GM12878 (cell line): ENCODE measurements at regions of chr3 and their contacts with region 1.

Region 1: GRCh38 chr3:27415202-27415601 is 46.0 kb upstream of the NEK10 start:
- DNase-seq: no peak
- ATAC-seq: no peak
- H3K4me3 ChIP-seq: no peak overlapping the region
- H3K27ac ChIP-seq: no peak overlapping the region
- H3K4me1 ChIP-seq: no peaks in the 10 kb centered on the region
- H3K27me3 ChIP-seq: no peaks in the 10 kb centered on the region
- CTCF ChIP-seq: no peak
- EP300 ChIP-seq: no peak
- POLR2A ChIP-seq: no peak
- RAD21 ChIP-seq: no peak

Region 2: DNA sequence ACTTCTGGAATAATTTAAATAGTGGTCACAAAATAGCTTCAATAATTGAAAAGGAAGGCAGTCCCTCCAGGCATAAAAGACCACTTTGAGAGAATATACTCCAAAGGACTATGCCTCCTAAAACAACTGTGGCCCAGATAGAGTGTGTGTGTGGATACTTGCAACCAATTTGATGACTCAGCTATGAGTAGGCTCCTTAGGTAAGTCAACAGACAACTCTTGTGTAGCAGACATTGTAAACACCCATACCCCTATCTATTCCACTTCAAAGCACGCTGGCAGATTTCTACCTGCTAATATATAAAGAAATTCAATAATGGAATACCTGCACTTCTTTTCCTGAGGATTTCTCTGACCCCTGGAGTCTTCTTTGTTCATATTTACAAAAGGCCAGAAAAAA is 300.5 kb before region 1 on chr3:
- CTCF ChIA-PET with region 1: no interaction called
- POLR2A ChIA-PET with region 1: no interaction called
- RAD21 ChIA-PET with region 1: no interaction called
- SMC1A ChIA-PET with region 1: no interaction called
- in situ Hi-C with region 1: no loop called
- intact Hi-C with region 1: no loop called
- DNase-seq: no peak
- ATAC-seq: no peak
- H3K4me3 ChIP-seq: no peak overlapping the region
- H3K27ac ChIP-seq: no peak overlapping the region
- H3K4me1 ChIP-seq: no peaks in the 10 kb centered on the region
- H3K27me3 ChIP-seq: no peaks in the 10 kb centered on the region
- CTCF ChIP-seq: no peak
- EP300 ChIP-seq: no peak
- POLR2A ChIP-seq: no peak
- RAD21 ChIP-seq: no peak

Region 3: DNA sequence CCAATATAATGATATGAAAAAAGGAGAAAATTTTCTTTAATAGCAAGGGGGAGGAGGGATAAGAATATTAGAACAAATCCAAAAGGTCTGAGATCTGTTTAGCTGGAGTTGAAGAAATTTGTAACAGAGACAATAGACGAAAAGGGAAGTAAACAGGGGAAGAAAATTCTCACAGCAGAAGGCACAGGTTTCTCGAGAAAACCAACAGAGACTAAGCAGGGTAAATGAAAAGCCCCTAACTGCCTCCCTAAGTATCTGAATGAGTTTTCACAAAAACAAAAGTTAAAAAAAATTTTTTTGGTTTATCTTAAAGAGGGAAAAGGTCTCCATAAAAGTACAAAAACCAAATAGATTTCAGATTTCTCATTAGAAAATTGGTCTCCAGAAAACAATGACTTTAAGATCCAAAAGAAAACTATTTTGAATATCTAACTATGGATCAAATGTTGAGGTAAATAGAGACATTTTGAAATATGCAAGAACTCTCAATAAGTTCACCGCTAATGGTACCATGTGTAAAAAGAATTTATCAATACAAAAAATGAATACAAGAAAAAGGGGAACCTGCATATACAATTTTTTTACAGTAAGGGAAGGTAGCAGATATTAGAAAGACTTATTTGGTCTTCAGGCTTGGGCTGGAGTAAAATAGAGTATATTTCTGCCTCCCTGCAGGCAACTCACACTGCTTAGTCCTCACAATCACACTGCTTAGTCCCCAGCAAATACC is 22.1 kb before region 1 on chr3:
- CTCF ChIA-PET with region 1: interaction called, 3 read pairs
- POLR2A ChIA-PET with region 1: no interaction called
- RAD21 ChIA-PET with region 1: interaction called, 3 read pairs
- SMC1A ChIA-PET with region 1: interaction called, 10 read pairs
- in situ Hi-C with region 1: no loop called
- intact Hi-C with region 1: no loop called
- DNase-seq: peak; percentile 15
- ATAC-seq: peak; percentile 87
- H3K4me3 ChIP-seq: no peak overlapping the region
- H3K27ac ChIP-seq: peak overlapping the region; percentile 50; the same call in 1 of the 2 replicates
- H3K4me1 ChIP-seq: no peaks in the 10 kb centered on the region
- H3K27me3 ChIP-seq: no peaks in the 10 kb centered on the region
- CTCF ChIP-seq: no peak
- EP300 ChIP-seq: peak; percentile 9 to 35; a peak in 1 of 4 replicates
- POLR2A ChIP-seq: no peak
- RAD21 ChIP-seq: no peak